T-cell (primary cell): ENCODE measurements at regions of chrX and their contacts with region 1.

Region 1: GRCh38 chrX:45515262-45516215 is 314.9 kb upstream of the DIPK2B start:
- DNase-seq: peak in 25 of 35 experiments; percentile 1 to 61 (median 14)
- ATAC-seq: no peak
- H3K4me3 ChIP-seq: no peak overlapping the region
- H3K4me3 Mint-ChIP-seq: no peak overlapping the region
- H3K27ac ChIP-seq: no peak overlapping the region
- H3K27ac Mint-ChIP-seq: no peak overlapping the region
- H3K4me1 ChIP-seq: no peaks in the 10 kb centered on the region
- H3K4me1 Mint-ChIP-seq: peaks cover 0 to 4% (median 1%) of the 10 kb centered on the region in 3 donors
- H3K27me3 ChIP-seq: no peaks in the 10 kb centered on the region
- H3K27me3 Mint-ChIP-seq: peaks cover 0 to 10% of the 10 kb centered on the region in 2 donors

Region 2: GRCh38 chrX:46376246-46376885 is 860.8 kb after region 1 on chrX:
- CTCF ChIA-PET with region 1: interaction called in 1 of 2 experiments, 10 read pairs
- POLR2A ChIA-PET with region 1: no interaction called
- DNase-seq: peak in 10 of 35 experiments; percentile 0 to 42 (median 5)
- ATAC-seq: peak in 1 of 4 experiments; percentile 47
- H3K4me3 ChIP-seq: no peak overlapping the region
- H3K4me3 Mint-ChIP-seq: no peak overlapping the region
- H3K27ac ChIP-seq: no peak overlapping the region
- H3K27ac Mint-ChIP-seq: no peak overlapping the region
- H3K4me1 ChIP-seq: peaks cover 0 to 2% of the 10 kb centered on the region in 2 experiments
- H3K4me1 Mint-ChIP-seq: no peaks in the 10 kb centered on the region
- H3K27me3 ChIP-seq: no peaks in the 10 kb centered on the region
- H3K27me3 Mint-ChIP-seq: peaks cover 0 to 17% of the 10 kb centered on the region in 2 donors

Region 3: DNA sequence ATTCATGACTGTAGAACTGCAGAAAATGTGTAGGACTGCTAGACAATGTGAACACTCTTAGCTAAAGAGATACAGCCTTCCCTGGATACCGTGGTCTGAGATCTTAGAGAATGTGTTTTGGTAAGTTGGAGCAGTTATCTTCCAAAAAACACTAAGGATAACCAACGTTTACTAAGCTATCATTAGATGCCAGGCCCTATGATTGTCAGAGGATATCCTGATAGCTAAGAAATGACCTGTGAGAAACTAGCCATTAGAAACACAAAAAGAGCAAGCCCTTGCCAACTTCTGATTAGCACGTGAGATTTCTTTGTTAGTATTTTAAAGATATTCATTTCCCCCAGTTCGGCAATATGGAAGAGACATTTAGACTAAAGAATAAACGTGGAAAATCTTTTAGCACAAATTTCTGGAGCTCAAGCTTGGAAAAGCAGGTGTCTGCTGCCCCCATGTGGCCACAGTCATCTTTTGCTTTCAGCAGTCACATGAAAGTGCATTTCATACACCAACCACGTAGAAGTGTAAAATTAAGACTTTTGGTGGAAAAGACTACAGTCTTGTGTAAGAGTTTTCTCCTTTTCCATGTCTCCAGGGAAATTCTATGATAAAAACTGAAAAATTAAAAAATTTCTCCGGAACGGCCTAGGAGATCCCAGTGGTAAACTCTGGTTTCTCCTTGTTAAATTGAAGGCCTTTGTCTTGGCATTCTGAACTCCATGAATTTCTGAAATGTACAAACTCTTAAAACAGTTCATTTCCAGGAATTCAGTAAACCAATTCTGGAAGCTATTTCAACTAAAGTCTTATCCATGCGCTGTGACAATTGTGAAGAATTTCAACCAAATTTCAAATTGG is 893.2 kb after region 1 on chrX:
- CTCF ChIA-PET with region 1: interaction called in 1 of 2 experiments, 11 read pairs
- POLR2A ChIA-PET with region 1: no interaction called
- DNase-seq: peak in 34 of 35 experiments; percentile 4 to 72 (median 44)
- ATAC-seq: no peak
- H3K4me3 ChIP-seq: no peak overlapping the region
- H3K4me3 Mint-ChIP-seq: no peak overlapping the region
- H3K27ac ChIP-seq: no peak overlapping the region
- H3K27ac Mint-ChIP-seq: peak overlapping the region in 1 of 2 donors; percentile 45
- H3K4me1 ChIP-seq: no peaks in the 10 kb centered on the region
- H3K4me1 Mint-ChIP-seq: peaks cover 0 to 3% (median 2%) of the 10 kb centered on the region in 3 donors
- H3K27me3 ChIP-seq: no peaks in the 10 kb centered on the region
- H3K27me3 Mint-ChIP-seq: no peaks in the 10 kb centered on the region